Gastrocnemius medialis (tissue), 4 donors: ENCODE measurements at regions of chr15 and their contacts with region 1.

Region 1: GRCh38 chr15:34855397-34855796 is 60.0 kb upstream of the ACTC1 start:
- DNase-seq: no peak
- ATAC-seq: no peak
- H3K4me3 ChIP-seq: no peak overlapping the region
- H3K27ac ChIP-seq: no peak overlapping the region
- H3K4me1 ChIP-seq: peaks cover 0 to 5% of the 10 kb centered on the region in 2 donors
- H3K27me3 ChIP-seq: no peaks in the 10 kb centered on the region
- CTCF ChIP-seq: no peak
- POLR2A ChIP-seq: no peak

Region 2: DNA sequence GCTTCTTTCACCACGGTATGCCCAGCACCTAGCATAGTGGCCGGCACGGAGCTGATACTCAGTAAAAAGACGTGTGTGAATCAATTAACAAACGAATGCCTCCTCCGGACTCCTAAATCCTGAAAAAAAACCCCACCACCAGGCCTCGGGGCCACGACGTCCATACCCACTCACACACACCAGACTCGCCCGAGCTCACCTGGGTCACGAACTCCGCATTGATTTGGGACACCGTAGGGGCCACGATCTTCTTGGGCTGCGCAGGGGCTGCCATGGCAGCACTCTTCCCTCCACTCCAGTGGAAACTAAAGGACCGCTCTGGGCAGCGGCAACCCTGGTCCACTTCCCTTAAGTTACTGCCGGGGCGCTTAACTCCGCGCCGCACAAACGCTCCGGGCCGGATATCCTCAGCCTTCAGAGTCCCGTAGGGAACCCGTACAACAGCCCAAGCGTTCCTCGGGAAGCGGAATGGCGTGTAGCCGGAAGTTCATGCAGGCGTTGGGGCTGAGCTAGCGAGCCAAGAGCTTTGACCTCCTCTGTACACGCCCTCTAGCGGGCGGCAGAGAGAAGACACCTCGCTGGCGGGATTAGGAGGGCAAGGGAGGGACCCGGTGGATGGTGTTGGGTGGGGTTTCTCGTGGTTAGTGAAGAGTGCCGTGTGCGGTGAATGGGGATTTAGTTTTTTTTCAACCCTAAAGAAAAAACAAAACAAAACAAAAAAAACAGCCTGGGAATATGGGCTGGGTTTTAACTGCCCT is 114.1 kb after region 1 on chr15 and contains the start of gene AQR:
- in situ Hi-C with region 1: loop called in 1 of 4 experiments (anchors 25 kb)
- intact Hi-C with region 1: no loop called
- DNase-seq: peak; percentile 95 to 96
- ATAC-seq: peak; percentile 100
- H3K4me3 ChIP-seq: peak within 1 kb of the TSS; percentile 79 to 96 (median 91)
- H3K27ac ChIP-seq: peak within 1 kb of the TSS; percentile 85 to 91 (median 88)
- H3K4me1 ChIP-seq: peaks cover 27 to 28% of the 10 kb centered on the region in 2 donors
- H3K27me3 ChIP-seq: no peaks in the 10 kb centered on the region
- CTCF ChIP-seq: peak; percentile 63 to 97 (median 88)
- POLR2A ChIP-seq: peak; percentile 53 to 66
- total RNA-seq, gene AQR: 6.3 to 13.1 (median 10.3) TPM